T-cell (primary cell): ENCODE measurements at regions of chr6 and their contacts with region 1.

Region 1: DNA sequence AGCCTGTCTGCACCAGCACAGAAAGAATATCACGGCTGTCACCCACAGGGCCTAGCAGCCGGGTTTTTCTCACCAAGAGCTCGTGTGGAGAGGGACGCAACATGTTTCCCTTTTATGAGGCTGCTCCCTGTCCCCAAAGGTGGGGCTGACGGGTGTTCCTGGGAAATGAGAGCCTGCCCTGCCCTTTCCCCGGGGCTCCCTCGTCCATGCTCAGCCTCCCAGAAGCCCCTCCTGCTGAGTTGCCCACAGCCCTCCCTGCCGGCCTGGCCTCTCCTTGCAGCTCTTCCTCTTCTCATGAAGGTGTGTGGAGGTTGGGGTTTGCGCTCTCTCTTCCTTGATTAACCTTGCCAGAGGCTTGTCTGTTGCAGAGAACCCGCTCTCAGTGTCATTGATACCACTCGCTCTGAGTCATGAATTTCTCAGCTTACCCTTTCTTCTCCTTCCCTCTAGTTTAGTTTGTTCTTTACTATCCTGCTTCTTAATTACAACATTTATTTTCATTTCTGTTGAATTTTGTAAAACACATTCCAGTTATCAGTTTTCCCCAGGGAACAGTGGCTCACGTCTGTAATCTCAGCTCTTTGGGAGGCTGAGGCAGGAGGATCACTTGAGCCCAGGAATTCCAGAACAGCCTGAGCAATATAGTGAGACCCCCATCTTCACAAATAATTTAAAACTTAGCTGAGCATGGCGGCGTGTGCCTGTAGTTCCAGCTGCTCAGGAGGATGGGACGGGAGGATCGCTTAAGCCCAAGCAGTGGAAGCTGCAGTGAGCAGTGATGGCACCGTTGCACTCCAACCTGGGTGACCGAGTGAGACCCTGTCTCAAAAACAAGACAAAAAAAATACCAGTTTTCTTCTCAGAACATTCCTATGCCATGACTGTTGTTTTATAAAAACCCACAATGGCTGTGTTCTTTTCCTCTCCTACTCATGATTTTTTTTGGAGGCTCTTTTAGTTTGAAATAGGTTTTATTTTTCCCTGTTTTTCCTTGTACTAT is 103.8 kb downstream of the TMEM242 start:
- DNase-seq: no peak
- ATAC-seq: no peak
- H3K4me3 ChIP-seq: no peak overlapping the region
- H3K4me3 Mint-ChIP-seq: no peak overlapping the region
- H3K27ac ChIP-seq: no peak overlapping the region
- H3K27ac Mint-ChIP-seq: no peak overlapping the region
- H3K4me1 ChIP-seq: peaks cover 15 to 33% of the 10 kb centered on the region in 2 experiments
- H3K4me1 Mint-ChIP-seq: peaks cover 25 to 43% (median 36%) of the 10 kb centered on the region in 3 donors
- H3K27me3 ChIP-seq: peaks cover 0 to 13% of the 10 kb centered on the region in 2 experiments
- H3K27me3 Mint-ChIP-seq: no peaks in the 10 kb centered on the region

Region 2: DNA sequence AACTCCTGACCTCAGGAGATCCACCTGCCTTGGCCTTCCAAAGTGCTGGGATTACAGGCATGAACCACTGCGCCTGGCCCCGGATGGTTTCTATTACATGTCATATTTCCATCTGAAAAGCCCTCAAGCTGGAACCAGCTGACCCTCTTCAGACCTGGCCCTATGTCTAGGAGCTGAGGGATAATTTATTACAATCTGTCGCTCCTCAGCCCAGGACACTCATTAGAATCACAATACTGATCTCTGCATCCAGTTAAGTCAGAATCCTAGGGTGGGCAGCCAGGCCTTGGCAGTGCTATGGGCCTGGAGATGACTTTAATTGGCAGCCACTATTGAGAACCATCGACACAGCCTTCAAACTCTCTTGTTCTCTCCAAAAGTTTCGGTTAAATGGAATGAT is 440.9 kb after region 1 on chr6:
- CTCF ChIA-PET with region 1: interaction called in 1 of 2 experiments, 11 read pairs
- POLR2A ChIA-PET with region 1: no interaction called
- DNase-seq: no peak
- ATAC-seq: no peak
- H3K4me3 ChIP-seq: no peak overlapping the region
- H3K4me3 Mint-ChIP-seq: no peak overlapping the region
- H3K27ac ChIP-seq: no peak overlapping the region
- H3K27ac Mint-ChIP-seq: no peak overlapping the region
- H3K4me1 ChIP-seq: no peaks in the 10 kb centered on the region
- H3K4me1 Mint-ChIP-seq: peaks cover 0 to 1% (median 0%) of the 10 kb centered on the region in 3 donors
- H3K27me3 ChIP-seq: no peaks in the 10 kb centered on the region
- H3K27me3 Mint-ChIP-seq: peaks cover 0 to 1% of the 10 kb centered on the region in 2 donors